ENCODE measurements at regions of chr2 and their contacts with region 1.

Region 1: GRCh38 chr2:136384531-136385303 is 266.8 kb upstream of the CXCR4 start:
- DNase-seq: peak; percentile 82
- ATAC-seq: peak; percentile 50
- H3K4me3 ChIP-seq: no peak overlapping the region
- H3K4me3 Mint-ChIP-seq: peak overlapping the region; percentile 44
- H3K27ac ChIP-seq: peak overlapping the region in 1 of 2 donors; percentile 11
- H3K27ac Mint-ChIP-seq: peak overlapping the region; percentile 76
- H3K4me1 ChIP-seq: peaks cover 30 to 42% of the 10 kb centered on the region in 2 donors
- H3K4me1 Mint-ChIP-seq: peaks cover 55% of the 10 kb centered on the region
- H3K27me3 ChIP-seq: no peaks in the 10 kb centered on the region
- H3K27me3 Mint-ChIP-seq: no peaks in the 10 kb centered on the region
- CTCF ChIP-seq: peak; percentile 87

Region 2: DNA sequence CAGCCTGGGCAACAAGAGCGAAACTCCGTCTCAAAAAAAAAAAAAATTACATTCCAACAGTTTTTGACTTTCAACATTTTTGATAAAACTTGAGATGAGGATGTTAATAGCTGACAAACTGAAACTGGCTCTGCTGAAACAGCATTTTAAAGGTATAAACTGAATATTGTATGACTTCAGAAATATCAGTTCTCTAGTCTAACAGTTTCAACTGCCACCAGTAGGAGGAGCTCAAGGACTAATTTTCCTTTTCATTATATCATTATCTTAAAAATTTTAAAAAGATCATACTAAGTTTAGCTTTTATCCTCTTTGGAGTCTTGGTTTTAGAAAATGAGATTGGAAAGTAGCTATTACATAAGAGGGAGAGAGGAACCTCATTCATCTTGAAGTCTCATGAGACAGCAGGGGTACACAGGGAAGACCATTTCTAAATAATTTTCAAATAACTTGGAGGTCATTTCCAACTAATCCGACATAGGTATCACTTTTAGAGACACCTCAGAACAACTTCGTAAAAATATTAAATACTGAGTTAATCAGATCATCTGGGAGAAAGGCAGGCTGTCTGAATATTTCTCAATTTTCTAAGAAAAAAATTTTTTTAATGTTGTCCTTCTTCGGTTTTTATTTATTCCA is 470.9 kb before region 1 on chr2:
- CTCF ChIA-PET with region 1: interaction called, 453 read pairs
- POLR2A ChIA-PET with region 1: interaction called, 11 read pairs
- intact Hi-C with region 1: loop called (anchors 1 kb)
- DNase-seq: peak; percentile 74
- ATAC-seq: peak; percentile 41
- H3K4me3 ChIP-seq: no peak overlapping the region
- H3K4me3 Mint-ChIP-seq: no peak overlapping the region
- H3K27ac ChIP-seq: peak overlapping the region in 1 of 2 donors; percentile 46
- H3K27ac Mint-ChIP-seq: peak overlapping the region; percentile 46
- H3K4me1 ChIP-seq: no peaks in the 10 kb centered on the region
- H3K4me1 Mint-ChIP-seq: peaks cover 10% of the 10 kb centered on the region
- H3K27me3 ChIP-seq: no peaks in the 10 kb centered on the region
- H3K27me3 Mint-ChIP-seq: no peaks in the 10 kb centered on the region
- CTCF ChIP-seq: peak; percentile 96

Region 3: GRCh38 chr2:135997380-135997779 is 387.3 kb before region 1 on chr2:
- CTCF ChIA-PET with region 1: interaction called, 72 read pairs
- POLR2A ChIA-PET with region 1: interaction called, 6 read pairs
- intact Hi-C with region 1: no loop called
- DNase-seq: peak; percentile 83
- ATAC-seq: peak; percentile 95
- H3K4me3 ChIP-seq: peak overlapping the region in 3 of 5 experiments; percentile 8 to 17 (median 10)
- H3K4me3 Mint-ChIP-seq: peak overlapping the region; percentile 74
- H3K27ac ChIP-seq: peak overlapping the region; percentile 47 to 50
- H3K27ac Mint-ChIP-seq: peak overlapping the region; percentile 79
- H3K4me1 ChIP-seq: peaks cover 52 to 57% of the 10 kb centered on the region in 2 donors
- H3K4me1 Mint-ChIP-seq: peaks cover 51% of the 10 kb centered on the region
- H3K27me3 ChIP-seq: no peaks in the 10 kb centered on the region
- H3K27me3 Mint-ChIP-seq: no peaks in the 10 kb centered on the region
- CTCF ChIP-seq: peak; percentile 26

Region 4: GRCh38 chr2:136117909-136118818 is 266.6 kb before region 1 on chr2 and contains the start of gene CXCR4:
- CTCF ChIA-PET with region 1: interaction called, 20 read pairs
- POLR2A ChIA-PET with region 1: interaction called, 47 read pairs
- intact Hi-C with region 1: loop called (anchors 1 kb)
- DNase-seq: peak; percentile 94
- ATAC-seq: peak; percentile 55
- H3K4me3 ChIP-seq: peak within 1 kb of the TSS; percentile 93 to 100 (median 98)
- H3K4me3 Mint-ChIP-seq: peak within 1 kb of the TSS; percentile 98
- H3K27ac ChIP-seq: peak within 1 kb of the TSS; percentile 96 to 99
- H3K27ac Mint-ChIP-seq: peak within 1 kb of the TSS; percentile 100
- H3K4me1 ChIP-seq: peaks cover 48 to 52% of the 10 kb centered on the region in 2 donors
- H3K4me1 Mint-ChIP-seq: peaks cover 59% of the 10 kb centered on the region
- H3K27me3 ChIP-seq: no peaks in the 10 kb centered on the region
- H3K27me3 Mint-ChIP-seq: no peaks in the 10 kb centered on the region
- CTCF ChIP-seq: no peak
- total RNA-seq, gene CXCR4: 2,047 and 2,119 TPM in 2 replicates

Region 5: GRCh38 chr2:136207030-136207623 is 177.6 kb before region 1 on chr2:
- CTCF ChIA-PET with region 1: interaction called, 25 read pairs
- POLR2A ChIA-PET with region 1: interaction called, 13 read pairs
- intact Hi-C with region 1: loop called (anchors 1 kb)
- DNase-seq: peak; percentile 94
- ATAC-seq: peak; percentile 65
- H3K4me3 ChIP-seq: peak overlapping the region in 4 of 5 experiments; percentile 1 to 44 (median 26)
- H3K4me3 Mint-ChIP-seq: peak overlapping the region; percentile 84
- H3K27ac ChIP-seq: peak overlapping the region; percentile 98 to 99
- H3K27ac Mint-ChIP-seq: peak overlapping the region; percentile 99
- H3K4me1 ChIP-seq: peaks cover 70 to 74% of the 10 kb centered on the region in 2 donors
- H3K4me1 Mint-ChIP-seq: peaks cover 77% of the 10 kb centered on the region
- H3K27me3 ChIP-seq: no peaks in the 10 kb centered on the region
- H3K27me3 Mint-ChIP-seq: no peaks in the 10 kb centered on the region
- CTCF ChIP-seq: no peak

Region 6: DNA sequence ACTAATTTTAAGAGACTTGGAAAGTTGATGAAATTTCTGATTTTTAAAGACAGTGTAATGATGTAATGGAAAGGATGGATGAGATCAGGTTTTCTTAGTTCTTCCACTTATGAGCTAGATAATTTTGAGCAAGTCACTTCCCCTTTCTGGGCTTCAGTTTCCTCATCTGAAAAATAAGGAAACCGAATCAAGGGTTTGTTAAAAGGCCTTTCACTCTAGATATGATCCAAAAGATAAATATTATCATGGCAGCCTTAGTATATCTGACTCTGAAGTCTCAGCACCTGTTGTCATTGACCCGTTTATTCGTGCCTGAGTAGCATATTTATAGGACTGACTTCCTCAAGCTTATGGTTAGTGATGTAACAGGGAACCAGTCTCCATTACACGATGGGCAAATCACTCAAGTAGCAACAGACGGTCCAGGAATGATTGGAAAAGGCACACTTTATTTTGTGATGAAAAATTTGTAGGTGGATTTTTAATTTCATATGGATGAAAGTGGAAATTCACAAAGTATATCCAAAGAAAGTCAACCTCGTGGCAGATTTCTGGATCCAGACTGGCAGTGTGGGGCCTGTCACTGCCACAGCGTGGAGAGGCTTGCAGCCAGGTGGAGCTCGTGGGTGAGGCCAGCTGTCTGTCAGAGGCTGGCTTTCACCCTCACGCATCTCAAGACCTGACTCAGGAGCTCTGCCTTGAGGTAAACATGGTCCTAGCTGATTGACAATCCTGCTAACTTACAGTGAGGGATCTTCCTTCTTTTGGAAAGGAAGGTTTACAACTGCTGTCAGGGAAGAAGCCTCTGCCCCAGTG is 128.9 kb before region 1 on chr2:
- CTCF ChIA-PET with region 1: interaction called, 137 read pairs
- POLR2A ChIA-PET with region 1: interaction called, 13 read pairs
- intact Hi-C with region 1: no loop called
- DNase-seq: peak; percentile 78
- ATAC-seq: peak; percentile 69
- H3K4me3 ChIP-seq: no peak overlapping the region
- H3K4me3 Mint-ChIP-seq: peak overlapping the region; percentile 64
- H3K27ac ChIP-seq: peak overlapping the region; percentile 43 to 74
- H3K27ac Mint-ChIP-seq: peak overlapping the region; percentile 92
- H3K4me1 ChIP-seq: peaks cover 55% of the 10 kb centered on the region in 2 donors
- H3K4me1 Mint-ChIP-seq: peaks cover 91% of the 10 kb centered on the region
- H3K27me3 ChIP-seq: no peaks in the 10 kb centered on the region
- H3K27me3 Mint-ChIP-seq: no peaks in the 10 kb centered on the region
- CTCF ChIP-seq: peak; percentile 24

Measured in B cell (primary cell).